Mammary epithelial cell (primary cell): ENCODE measurements at regions of chr6 and their contacts with region 1.

Region 1: GRCh38 chr6:137832110-137832509 is 34.9 kb upstream of the TNFAIP3 start:
- DNase-seq: peak; percentile 93
- H3K4me3 ChIP-seq: no peak overlapping the region
- H3K27ac ChIP-seq: peak overlapping the region; percentile 84
- H3K4me1 ChIP-seq: peaks cover 61% of the 10 kb centered on the region
- H3K27me3 ChIP-seq: no peaks in the 10 kb centered on the region
- CTCF ChIP-seq: no peak

Region 2: DNA sequence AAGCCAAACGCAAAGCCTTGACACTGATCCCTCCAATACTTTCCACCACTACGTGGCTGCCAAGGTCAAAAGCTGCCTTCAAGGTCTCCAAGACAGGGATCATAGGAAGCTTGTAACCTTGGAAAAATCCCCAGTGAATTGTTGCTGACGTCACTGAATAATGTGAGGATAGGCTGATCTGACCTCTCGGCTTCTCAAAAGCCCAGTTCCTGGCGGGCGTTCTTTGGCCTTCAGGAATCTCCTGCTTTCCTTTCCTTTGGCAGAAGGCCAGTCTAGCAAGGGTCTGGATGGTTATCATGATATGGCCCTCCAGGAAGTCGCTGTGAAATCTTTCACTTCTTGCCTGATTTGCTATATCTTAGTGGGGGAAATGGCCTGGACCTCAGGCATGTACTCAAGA is 26.5 kb before region 1 on chr6:
- CTCF ChIA-PET with region 1: no interaction called
- dilution Hi-C with region 1: no loop called
- in situ Hi-C with region 1: no loop called
- intact Hi-C with region 1: no loop called
- DNase-seq: no peak
- H3K4me3 ChIP-seq: no peak overlapping the region
- H3K27ac ChIP-seq: no peak overlapping the region
- H3K4me1 ChIP-seq: peaks cover 20% of the 10 kb centered on the region
- H3K27me3 ChIP-seq: no peaks in the 10 kb centered on the region
- CTCF ChIP-seq: no peak

Region 3: GRCh38 chr6:137853569-137854213 is 21.6 kb after region 1 on chr6:
- CTCF ChIA-PET with region 1: no interaction called
- dilution Hi-C with region 1: no loop called
- in situ Hi-C with region 1: no loop called
- intact Hi-C with region 1: loop called (anchors 2 kb)
- DNase-seq: peak; percentile 89
- H3K4me3 ChIP-seq: no peak overlapping the region
- H3K27ac ChIP-seq: peak overlapping the region; percentile 89
- H3K4me1 ChIP-seq: peaks cover 26% of the 10 kb centered on the region
- H3K27me3 ChIP-seq: no peaks in the 10 kb centered on the region
- CTCF ChIP-seq: no peak